HAP-1 (cell line): ENCODE measurements at regions of chr3 and their contacts with region 1.

Region 1: DNA sequence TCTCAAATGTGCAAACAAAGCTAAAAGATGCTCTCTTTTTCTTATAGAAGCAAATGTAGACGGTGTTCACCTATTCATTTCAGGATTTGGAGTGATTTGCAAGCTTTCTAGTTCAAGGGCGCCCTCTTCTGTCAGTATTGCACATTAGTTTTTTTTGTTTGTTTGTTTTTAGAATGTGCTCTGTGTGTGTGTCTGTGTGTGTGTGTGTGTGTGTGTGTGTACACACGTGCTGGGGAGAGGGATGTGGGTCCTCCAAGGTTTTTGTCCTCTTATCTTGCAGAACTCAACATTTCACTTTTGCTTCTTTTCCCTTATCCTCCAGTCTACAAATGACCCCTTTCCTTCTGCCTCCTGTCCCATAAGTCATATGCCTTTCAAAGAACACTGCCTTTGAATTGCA is 23.5 kb downstream of the DNAH1 start:
- DNase-seq: peak; percentile 64 to 79
- H3K4me3 ChIP-seq: no peak overlapping the region
- H3K4me1 ChIP-seq: no peaks in the 10 kb centered on the region
- H3K27me3 ChIP-seq: no peaks in the 10 kb centered on the region

Region 2: DNA sequence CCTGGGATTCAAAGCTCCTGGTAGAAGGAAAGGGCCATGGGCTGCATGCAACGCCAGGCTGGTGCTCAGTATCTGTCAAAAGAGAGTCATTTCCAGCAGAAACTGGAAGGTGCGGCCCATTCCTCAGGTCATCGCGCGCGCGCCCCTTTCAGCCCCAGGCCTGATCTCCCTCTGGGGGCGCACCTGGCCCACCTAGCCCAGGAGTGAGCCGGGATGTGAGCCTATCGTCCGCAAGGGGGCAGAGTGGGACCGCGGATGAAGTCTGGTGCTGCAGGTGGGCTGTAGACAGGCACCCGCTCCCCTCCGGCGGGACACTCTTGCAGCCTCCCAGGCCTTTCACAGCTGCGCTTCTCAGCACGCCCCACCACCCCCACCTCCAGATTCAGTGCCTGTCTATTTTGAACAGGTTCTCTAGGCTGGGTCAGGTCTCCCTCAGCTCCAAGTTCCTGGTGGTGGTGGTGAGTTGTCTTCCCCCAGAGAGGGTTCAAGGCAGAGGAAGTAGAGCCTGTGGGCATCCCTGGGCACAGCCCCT is 338.1 kb before region 1 on chr3:
- in situ Hi-C with region 1: loop called (anchors 5 kb)
- DNase-seq: peak; percentile 75 to 93
- H3K4me3 ChIP-seq: no peak overlapping the region
- H3K4me1 ChIP-seq: peaks cover 2% of the 10 kb centered on the region; the same call in 1 of the 2 replicates
- H3K27me3 ChIP-seq: no peaks in the 10 kb centered on the region

Region 3: GRCh38 chr3:52231502-52232293 is 107.9 kb before region 1 on chr3:
- in situ Hi-C with region 1: loop called (anchors 5 kb)
- DNase-seq: peak in 1 of 2 experiments; percentile 89
- H3K4me3 ChIP-seq: no peak overlapping the region
- H3K4me1 ChIP-seq: peaks cover 3% of the 10 kb centered on the region; the same call in 1 of the 2 replicates
- H3K27me3 ChIP-seq: no peaks in the 10 kb centered on the region